Natural killer cell (primary cell): ENCODE measurements at regions of chr15 and their contacts with region 1.

Region 1: GRCh38 chr15:94305133-94305532 is 73.8 kb downstream of the MCTP2 start:
- DNase-seq: peak; percentile 48 to 64
- ATAC-seq: peak; percentile 70 to 84 (median 80)
- H3K4me3 ChIP-seq: no peak overlapping the region
- H3K4me3 Mint-ChIP-seq: peak overlapping the region; percentile 83
- H3K27ac ChIP-seq: peak overlapping the region; percentile 84
- H3K27ac Mint-ChIP-seq: peak overlapping the region in 1 of 2 donors; percentile 93
- H3K4me1 ChIP-seq: peaks cover 60% of the 10 kb centered on the region
- H3K4me1 Mint-ChIP-seq: peaks cover 90 to 94% of the 10 kb centered on the region in 2 donors
- H3K27me3 ChIP-seq: no peaks in the 10 kb centered on the region
- H3K27me3 Mint-ChIP-seq: no peaks in the 10 kb centered on the region
- CTCF ChIP-seq: no peak

Region 2: GRCh38 chr15:94247789-94248638 is 57.1 kb before region 1 on chr15:
- intact Hi-C with region 1: no loop called
- DNase-seq: no peak
- ATAC-seq: peak in 2 of 3 donors; percentile 13 to 25
- H3K4me3 ChIP-seq: no peak overlapping the region
- H3K4me3 Mint-ChIP-seq: peak overlapping the region; percentile 86
- H3K27ac ChIP-seq: peak overlapping the region; percentile 76
- H3K27ac Mint-ChIP-seq: peak overlapping the region in 1 of 2 donors; percentile 92
- H3K4me1 ChIP-seq: peaks cover 22% of the 10 kb centered on the region
- H3K4me1 Mint-ChIP-seq: peaks cover 71 to 73% of the 10 kb centered on the region in 2 donors
- H3K27me3 ChIP-seq: no peaks in the 10 kb centered on the region
- H3K27me3 Mint-ChIP-seq: no peaks in the 10 kb centered on the region
- CTCF ChIP-seq: no peak

Region 3: DNA sequence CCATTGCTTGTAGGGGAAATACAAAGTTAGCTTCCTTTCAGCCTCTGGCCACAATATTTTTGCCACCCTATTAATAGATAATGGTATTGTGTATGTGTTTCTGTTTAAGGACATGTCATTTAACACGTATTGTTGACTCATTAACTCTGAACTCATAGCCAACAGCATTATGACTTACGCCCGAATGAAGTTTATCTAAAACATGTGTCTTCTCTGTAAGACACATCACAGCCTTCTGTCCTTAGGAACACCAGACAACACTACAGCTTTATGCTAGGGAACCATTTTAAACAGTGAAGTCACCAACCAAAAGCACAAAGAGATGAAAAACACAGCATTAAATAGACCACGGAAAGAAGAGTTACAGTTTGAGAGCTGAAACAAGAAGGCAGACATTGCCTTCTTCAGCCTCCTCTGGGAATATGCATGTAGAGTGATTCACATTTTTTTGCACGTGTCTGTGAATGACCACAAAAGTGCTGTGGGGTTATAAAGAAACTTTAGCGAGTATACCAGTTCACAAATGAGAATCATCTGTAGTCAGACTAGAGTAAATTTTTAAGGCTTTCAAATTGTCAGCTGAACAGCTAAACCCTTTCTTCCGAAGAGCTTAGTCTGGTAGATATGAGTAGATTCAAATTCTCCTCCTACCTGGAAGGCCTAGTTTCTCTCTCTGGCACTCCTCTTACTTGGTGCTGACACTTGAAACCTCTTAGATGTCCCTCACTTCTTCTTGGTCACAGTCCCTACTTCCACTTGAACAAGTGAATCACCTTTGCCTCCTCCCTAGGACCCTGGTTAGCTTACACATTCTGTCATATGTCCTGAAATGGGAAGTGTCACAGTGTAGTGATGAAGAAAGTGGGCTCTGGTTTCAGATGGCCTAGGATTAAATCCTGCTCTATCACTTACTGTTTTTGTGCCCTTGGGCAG is 41.5 kb before region 1 on chr15:
- intact Hi-C with region 1: loop called (anchors 2 kb)
- DNase-seq: no peak
- ATAC-seq: peak; percentile 71 to 76 (median 74)
- H3K4me3 ChIP-seq: no peak overlapping the region
- H3K4me3 Mint-ChIP-seq: peak overlapping the region; percentile 80
- H3K27ac ChIP-seq: peak overlapping the region; percentile 67
- H3K27ac Mint-ChIP-seq: peak overlapping the region in 1 of 2 donors; percentile 96
- H3K4me1 ChIP-seq: peaks cover 56% of the 10 kb centered on the region
- H3K4me1 Mint-ChIP-seq: peaks cover 80 to 82% of the 10 kb centered on the region in 2 donors
- H3K27me3 ChIP-seq: no peaks in the 10 kb centered on the region
- H3K27me3 Mint-ChIP-seq: no peaks in the 10 kb centered on the region
- CTCF ChIP-seq: no peak

Region 4: DNA sequence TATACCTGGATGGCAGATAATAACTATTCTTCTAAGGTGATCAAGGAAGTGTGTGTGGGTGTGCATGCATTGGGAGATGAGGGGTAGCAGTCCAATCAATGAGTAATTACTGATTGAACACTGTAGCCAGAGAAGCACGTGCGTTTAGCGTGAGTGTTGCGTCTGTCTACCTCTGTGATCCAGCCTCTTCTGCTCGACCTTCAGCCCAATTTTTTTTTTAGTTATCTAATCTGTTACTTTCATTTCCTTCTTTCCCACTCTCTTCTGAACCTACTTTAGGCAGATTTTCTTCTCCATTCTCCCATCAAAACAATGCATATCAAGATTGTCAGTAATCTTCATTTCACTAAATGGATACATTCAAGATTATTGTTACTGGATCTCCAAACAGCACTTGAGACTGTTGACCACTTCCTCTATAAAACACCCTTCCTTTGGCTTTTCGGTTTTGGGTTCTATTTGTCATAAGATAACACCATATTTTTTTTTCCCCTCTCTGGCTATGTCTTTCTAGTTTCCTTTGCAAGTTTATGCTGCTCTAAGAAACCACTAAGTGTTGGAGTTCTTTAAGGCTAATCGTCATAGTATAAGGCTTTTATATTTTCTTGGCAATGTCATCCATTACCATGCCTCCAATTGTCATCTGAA is 32.8 kb before region 1 on chr15:
- intact Hi-C with region 1: loop called (anchors 1 kb)
- DNase-seq: peak in 1 of 2 donors; percentile 62
- ATAC-seq: peak; percentile 74 to 88 (median 86)
- H3K4me3 ChIP-seq: no peak overlapping the region
- H3K4me3 Mint-ChIP-seq: no peak overlapping the region
- H3K27ac ChIP-seq: peak overlapping the region; percentile 93
- H3K27ac Mint-ChIP-seq: no peak overlapping the region
- H3K4me1 ChIP-seq: peaks cover 41% of the 10 kb centered on the region
- H3K4me1 Mint-ChIP-seq: peaks cover 14 to 23% of the 10 kb centered on the region in 2 donors
- H3K27me3 ChIP-seq: no peaks in the 10 kb centered on the region
- H3K27me3 Mint-ChIP-seq: no peaks in the 10 kb centered on the region
- CTCF ChIP-seq: no peak

Region 5: GRCh38 chr15:94287794-94288246 is 17.3 kb before region 1 on chr15:
- intact Hi-C with region 1: loop called (anchors 1 kb)
- DNase-seq: peak; percentile 68 to 78
- ATAC-seq: peak; percentile 91 to 99 (median 96)
- H3K4me3 ChIP-seq: peak overlapping the region; percentile 22
- H3K4me3 Mint-ChIP-seq: peak overlapping the region; percentile 88
- H3K27ac ChIP-seq: peak overlapping the region; percentile 93
- H3K27ac Mint-ChIP-seq: peak overlapping the region in 1 of 2 donors; percentile 93
- H3K4me1 ChIP-seq: peaks cover 33% of the 10 kb centered on the region
- H3K4me1 Mint-ChIP-seq: peaks cover 88 to 92% of the 10 kb centered on the region in 2 donors
- H3K27me3 ChIP-seq: no peaks in the 10 kb centered on the region
- H3K27me3 Mint-ChIP-seq: no peaks in the 10 kb centered on the region
- CTCF ChIP-seq: no peak

Region 6: GRCh38 chr15:94383706-94384105 is 78.6 kb after region 1 on chr15:
- intact Hi-C with region 1: no loop called
- DNase-seq: no peak
- ATAC-seq: no peak
- H3K4me3 ChIP-seq: no peak overlapping the region
- H3K4me3 Mint-ChIP-seq: no peak overlapping the region
- H3K27ac ChIP-seq: no peak overlapping the region
- H3K27ac Mint-ChIP-seq: peak overlapping the region in 1 of 2 donors; percentile 50
- H3K4me1 ChIP-seq: peaks cover 31% of the 10 kb centered on the region
- H3K4me1 Mint-ChIP-seq: peaks cover 66 to 70% of the 10 kb centered on the region in 2 donors
- H3K27me3 ChIP-seq: no peaks in the 10 kb centered on the region
- H3K27me3 Mint-ChIP-seq: no peaks in the 10 kb centered on the region
- CTCF ChIP-seq: no peak

Region 7: GRCh38 chr15:94456226-94456625 is 151.1 kb after region 1 on chr15:
- intact Hi-C with region 1: no loop called
- DNase-seq: no peak
- ATAC-seq: no peak
- H3K4me3 ChIP-seq: no peak overlapping the region
- H3K4me3 Mint-ChIP-seq: no peak overlapping the region
- H3K27ac ChIP-seq: no peak overlapping the region
- H3K27ac Mint-ChIP-seq: no peak overlapping the region
- H3K4me1 ChIP-seq: no peaks in the 10 kb centered on the region
- H3K4me1 Mint-ChIP-seq: peaks cover 14 to 20% of the 10 kb centered on the region in 2 donors
- H3K27me3 ChIP-seq: no peaks in the 10 kb centered on the region
- H3K27me3 Mint-ChIP-seq: no peaks in the 10 kb centered on the region
- CTCF ChIP-seq: no peak